Activated naive CD4-positive, alpha-beta T cell treated with anti-CD3 and anti-CD28 coated beads for 36 hours (primary cell): ENCODE measurements at regions of chr3 and their contacts with region 1.

Region 1: GRCh38 chr3:141738022-141738890 is at the start of gene RNF7:
- DNase-seq: peak; percentile 96
- H3K4me3 Mint-ChIP-seq: peak within 1 kb of the TSS; percentile 99
- H3K27ac Mint-ChIP-seq: peak within 1 kb of the TSS; percentile 99
- H3K4me1 Mint-ChIP-seq: peaks cover 36% of the 10 kb centered on the region
- H3K27me3 Mint-ChIP-seq: no peaks in the 10 kb centered on the region
- total RNA-seq, gene RNF7: 56.3 to 57.4 TPM

Region 2: GRCh38 chr3:140941434-140942220 is 796.6 kb before region 1 on chr3 and contains the start of gene SLC25A36:
- CTCF ChIA-PET with region 1: no interaction called
- intact Hi-C with region 1: loop called (anchors 1 kb)
- DNase-seq: peak; percentile 99
- H3K4me3 Mint-ChIP-seq: peak within 1 kb of the TSS; percentile 89
- H3K27ac Mint-ChIP-seq: peak within 1 kb of the TSS; percentile 88
- H3K4me1 Mint-ChIP-seq: peaks cover 35% of the 10 kb centered on the region
- H3K27me3 Mint-ChIP-seq: no peaks in the 10 kb centered on the region
- total RNA-seq, gene SLC25A36: 48.7 to 50.1 TPM

Region 3: DNA sequence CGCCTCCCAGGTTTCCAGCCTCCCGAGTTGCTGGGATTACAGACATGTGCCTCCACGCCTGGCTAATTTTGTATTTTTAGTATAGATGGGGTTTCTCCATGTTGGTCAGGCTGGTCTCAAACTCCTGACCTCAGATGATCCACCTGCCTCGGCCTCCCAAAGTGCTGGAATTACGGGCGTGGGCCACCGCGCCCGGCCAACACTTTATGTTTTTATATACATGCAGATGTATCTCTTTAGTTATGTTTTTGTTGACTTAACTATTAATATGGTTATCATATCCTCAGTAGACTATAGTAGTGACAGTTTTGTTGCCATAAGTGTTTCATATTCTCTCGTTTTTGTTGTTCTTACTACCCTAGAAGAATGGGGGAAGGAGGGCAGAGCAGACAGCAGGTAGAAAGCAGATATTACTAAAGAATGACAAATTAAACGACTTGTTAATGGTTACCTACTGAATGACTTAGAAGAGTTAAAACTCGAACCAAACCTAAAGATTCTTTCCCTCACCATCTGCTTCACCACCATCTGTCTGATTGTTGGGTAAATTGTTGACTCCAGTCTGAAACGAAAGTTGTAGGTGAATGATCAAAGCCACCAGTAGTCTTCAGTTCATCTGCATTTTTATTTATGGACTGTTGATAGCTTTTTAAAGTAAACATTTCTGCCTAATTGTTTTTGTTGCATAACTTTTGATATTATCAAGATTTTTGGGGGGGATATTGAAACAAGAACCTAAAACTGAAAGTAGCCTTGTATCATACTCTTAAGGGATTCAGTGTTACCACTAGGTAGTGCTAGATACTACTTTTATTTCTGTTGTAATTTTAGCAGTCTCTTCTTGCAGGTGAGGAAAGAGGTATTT is 162.1 kb before region 1 on chr3:
- CTCF ChIA-PET with region 1: no interaction called
- intact Hi-C with region 1: loop called (anchors 2 kb)
- DNase-seq: no peak
- H3K4me3 Mint-ChIP-seq: no peak overlapping the region
- H3K27ac Mint-ChIP-seq: peak overlapping the region; percentile 63
- H3K4me1 Mint-ChIP-seq: peaks cover 14% of the 10 kb centered on the region
- H3K27me3 Mint-ChIP-seq: no peaks in the 10 kb centered on the region

Region 4: GRCh38 chr3:141894524-141895178 is 156.4 kb after region 1 on chr3:
- CTCF ChIA-PET with region 1: interaction called, 4 read pairs
- intact Hi-C with region 1: loop called (anchors 5 kb)
- DNase-seq: no peak
- H3K4me3 Mint-ChIP-seq: no peak overlapping the region
- H3K27ac Mint-ChIP-seq: no peak overlapping the region
- H3K4me1 Mint-ChIP-seq: peaks cover 36% of the 10 kb centered on the region
- H3K27me3 Mint-ChIP-seq: no peaks in the 10 kb centered on the region

Region 5: GRCh38 chr3:142129516-142130171 is 391.4 kb after region 1 on chr3:
- CTCF ChIA-PET with region 1: no interaction called
- intact Hi-C with region 1: loop called (anchors 2 kb)
- DNase-seq: no peak
- H3K4me3 Mint-ChIP-seq: no peak overlapping the region
- H3K27ac Mint-ChIP-seq: no peak overlapping the region
- H3K4me1 Mint-ChIP-seq: peaks cover 2% of the 10 kb centered on the region
- H3K27me3 Mint-ChIP-seq: no peaks in the 10 kb centered on the region

Region 6: DNA sequence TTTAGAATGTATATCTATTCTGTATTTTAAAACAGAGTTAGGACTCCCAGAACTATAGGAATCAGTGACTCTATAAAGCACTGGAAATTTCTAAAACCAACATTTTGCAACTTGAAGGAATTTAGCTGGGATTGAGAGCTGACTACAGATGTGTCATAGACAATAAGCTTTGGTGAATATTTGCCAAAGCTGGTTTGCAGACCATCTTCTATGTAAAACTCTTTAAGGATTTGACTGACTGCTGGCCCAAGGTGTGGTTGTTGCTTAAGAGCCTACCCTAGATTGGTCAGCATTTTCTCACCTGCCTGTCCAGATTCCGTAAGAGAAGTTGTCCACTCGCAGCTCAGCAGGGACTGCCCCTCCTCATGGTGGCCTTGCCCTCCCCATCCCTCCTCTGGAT is 560.4 kb after region 1 on chr3:
- CTCF ChIA-PET with region 1: no interaction called
- intact Hi-C with region 1: no loop called
- DNase-seq: no peak
- H3K4me3 Mint-ChIP-seq: no peak overlapping the region
- H3K27ac Mint-ChIP-seq: no peak overlapping the region
- H3K4me1 Mint-ChIP-seq: no peaks in the 10 kb centered on the region
- H3K27me3 Mint-ChIP-seq: no peaks in the 10 kb centered on the region

Region 7: DNA sequence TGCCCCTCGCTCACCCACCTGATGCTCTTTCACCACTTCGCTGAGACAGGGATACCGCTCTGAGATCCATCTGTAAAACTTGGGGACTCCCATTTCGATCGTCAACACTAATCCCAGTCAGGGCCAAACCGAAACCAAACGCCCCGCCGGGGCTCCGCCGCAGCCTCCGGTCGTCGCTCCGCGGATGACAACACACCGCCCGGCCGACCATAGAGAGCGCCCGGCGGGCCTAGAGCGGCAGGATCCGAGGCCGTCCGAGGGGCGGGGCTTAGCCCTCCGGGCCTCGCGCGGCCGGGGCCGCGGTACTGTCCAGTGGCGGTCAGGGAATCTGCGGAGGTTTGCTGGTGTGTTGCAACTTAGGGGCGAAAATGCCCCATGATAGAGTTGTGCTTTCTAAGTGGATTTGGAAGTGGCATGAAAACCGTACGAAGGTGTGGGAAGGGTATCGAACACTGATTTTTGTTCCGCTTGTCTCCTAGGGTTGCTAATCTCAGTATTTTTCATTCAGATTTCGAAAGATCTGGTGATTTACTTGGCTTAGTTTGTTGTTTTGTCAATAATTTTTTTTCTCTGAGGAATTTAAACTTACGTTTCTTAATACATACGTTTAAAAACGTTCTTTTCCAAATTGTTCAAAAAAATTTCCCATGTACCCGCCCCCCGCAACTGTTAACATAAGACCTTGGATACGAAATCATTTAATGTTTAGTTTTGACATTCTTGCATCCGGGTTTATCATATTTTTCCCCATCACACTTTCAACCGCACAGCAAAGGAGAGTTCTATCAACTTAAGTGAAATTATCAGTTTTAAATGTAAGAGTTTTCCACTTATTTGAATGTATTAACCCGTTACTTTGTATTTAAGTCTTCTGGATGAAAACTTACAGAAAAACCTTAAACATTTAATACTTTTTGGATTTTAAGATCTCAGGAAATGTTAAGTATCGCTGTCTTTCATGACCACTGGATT is 709.9 kb after region 1 on chr3 and contains the start of gene XRN1:
- CTCF ChIA-PET with region 1: no interaction called
- intact Hi-C with region 1: loop called (anchors 1 kb)
- DNase-seq: peak; percentile 97
- H3K4me3 Mint-ChIP-seq: peak within 1 kb of the TSS; percentile 98
- H3K27ac Mint-ChIP-seq: peak within 1 kb of the TSS; percentile 100
- H3K4me1 Mint-ChIP-seq: peaks cover 27% of the 10 kb centered on the region
- H3K27me3 Mint-ChIP-seq: no peaks in the 10 kb centered on the region
- total RNA-seq, gene XRN1: 63.9 to 64.5 TPM